ENCODE measurements at regions of chr3 and their contacts with region 1.

Region 1: GRCh38 chr3:84547971-84548970 is 410.5 kb upstream of the CADM2 start:
- DNase-seq: peak in 4 of 10 donors; percentile 21 to 76 (median 49)

Region 2: DNA sequence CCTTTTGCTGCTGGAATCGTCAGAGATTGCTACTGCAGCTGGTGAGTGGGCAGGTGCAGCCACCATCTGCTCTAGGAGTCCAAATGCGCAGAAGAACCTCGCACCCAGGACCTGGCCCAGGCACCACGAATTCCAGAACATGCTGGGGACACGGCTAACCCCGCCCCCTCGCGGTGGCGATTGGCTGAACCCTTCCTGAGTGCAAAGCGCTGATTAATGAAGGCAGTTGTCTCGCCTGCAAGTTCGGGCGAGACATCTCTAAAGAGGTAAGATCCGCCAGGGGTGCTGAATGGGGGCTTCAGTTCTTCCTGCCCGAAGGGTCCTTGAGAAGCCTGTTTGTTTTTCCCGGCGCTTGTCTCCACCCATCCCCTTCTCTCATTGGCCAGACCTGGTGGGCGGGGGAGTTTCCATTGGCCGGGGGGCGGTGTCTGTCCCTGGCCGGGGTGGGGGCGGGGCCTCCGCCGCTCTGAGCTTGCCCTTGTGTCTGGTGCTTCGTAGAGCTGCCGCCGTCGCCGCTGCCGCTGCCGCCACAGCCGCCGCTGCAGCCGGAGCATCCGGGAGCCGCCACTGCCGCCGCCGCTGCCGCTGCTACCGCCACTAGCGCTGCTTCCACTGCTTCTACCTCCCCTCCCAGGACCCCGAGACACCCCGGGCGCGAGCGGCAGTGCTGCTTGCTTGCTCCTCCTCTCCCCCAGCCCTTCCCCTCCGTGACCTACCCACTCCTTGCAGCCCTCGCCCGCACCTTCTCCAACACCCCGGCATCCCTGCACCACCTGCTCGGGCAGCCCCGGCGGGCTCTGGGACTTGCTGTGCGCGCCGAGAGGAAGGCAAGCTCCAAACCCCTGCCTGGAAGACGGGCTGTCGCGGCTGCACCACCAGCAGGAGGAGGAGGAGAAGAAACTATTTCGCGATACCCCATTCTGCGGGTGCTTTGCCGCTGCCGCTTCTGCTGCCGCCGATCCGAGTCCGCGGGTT is 410.5 kb after region 1 on chr3 and contains the start of gene CADM2:
- intact Hi-C with region 1: loop called (anchors 5 kb)
- DNase-seq: peak; percentile 91 to 99 (median 94)

Region 3: GRCh38 chr3:85360742-85361387 is 812.6 kb after region 1 on chr3:
- intact Hi-C with region 1: loop called (anchors 5 kb)
- DNase-seq: peak in 9 of 10 donors; percentile 33 to 91 (median 77)

Region 4: DNA sequence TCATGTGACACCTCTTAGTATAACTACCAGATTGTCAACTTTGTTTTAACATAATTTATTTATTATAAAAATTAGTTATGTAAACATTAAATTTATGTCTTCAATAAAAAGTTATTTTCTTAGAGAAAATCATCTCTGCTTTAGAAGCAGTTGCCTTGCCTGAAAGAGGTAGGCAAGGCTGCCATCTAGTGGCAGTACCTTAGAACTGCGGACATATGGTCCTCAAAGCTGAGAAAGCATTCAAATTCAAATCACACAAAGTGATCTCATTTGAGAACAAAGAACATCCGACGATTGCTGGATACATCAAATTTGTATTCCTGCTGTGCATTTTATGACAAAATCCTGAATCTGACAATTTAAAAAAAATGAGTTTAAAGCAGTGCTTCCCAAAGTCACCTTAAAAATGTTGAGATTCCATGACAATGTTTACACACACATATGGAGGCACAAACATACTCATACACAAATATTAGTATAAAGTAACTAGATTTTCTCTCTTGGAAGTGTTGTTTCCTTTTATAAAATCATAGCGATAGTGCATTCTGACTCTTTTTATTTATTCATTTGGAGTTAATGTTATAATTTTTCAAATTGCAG is 1027.9 kb after region 1 on chr3:
- intact Hi-C with region 1: loop called (anchors 5 kb)
- DNase-seq: peak in 9 of 10 donors; percentile 49 to 95 (median 81)

Measured in posterior cingulate gyrus (tissue), 11 donors.